ENCODE measurements at regions of chr2 and their contacts with region 1.

Region 1: GRCh38 chr2:54657664-54658083 is 65.8 kb upstream of the EML6 start:
- DNase-seq: peak; percentile 61 to 82
- ATAC-seq: peak; percentile 56
- H3K4me3 ChIP-seq: no peak overlapping the region
- H3K27ac ChIP-seq: no peak overlapping the region
- H3K4me1 ChIP-seq: no peaks in the 10 kb centered on the region
- H3K27me3 ChIP-seq: no peaks in the 10 kb centered on the region

Region 2: DNA sequence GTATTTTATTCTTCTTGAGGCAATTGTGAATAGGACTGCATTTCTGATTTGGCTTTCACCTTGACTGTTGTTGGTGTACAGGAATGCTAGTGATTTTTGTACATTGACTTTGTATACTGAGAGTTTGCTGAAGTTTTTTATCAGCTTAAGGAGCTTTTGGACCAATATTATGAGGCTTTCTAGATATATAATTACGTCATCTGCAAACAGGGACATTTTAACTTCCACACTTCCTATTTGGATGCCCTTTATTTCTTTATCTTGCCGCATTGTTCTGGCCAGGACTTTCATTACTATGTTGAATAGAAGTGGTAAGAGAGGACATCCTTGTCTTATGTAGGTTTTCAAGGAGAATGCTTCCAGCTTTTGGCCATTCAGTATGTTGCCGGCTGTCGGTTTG is 1315.4 kb before region 1 on chr2:
- intact Hi-C with region 1: no loop called
- DNase-seq: no peak
- ATAC-seq: no peak
- H3K4me3 ChIP-seq: no peak overlapping the region
- H3K27ac ChIP-seq: no peak overlapping the region
- H3K4me1 ChIP-seq: no peaks in the 10 kb centered on the region
- H3K27me3 ChIP-seq: no peaks in the 10 kb centered on the region

Region 3: GRCh38 chr2:54522624-54523281 is 134.9 kb before region 1 on chr2:
- intact Hi-C with region 1: loop called in 1 of 2 experiments (anchors 10 kb)
- DNase-seq: no peak
- ATAC-seq: peak; percentile 76
- H3K4me3 ChIP-seq: no peak overlapping the region
- H3K27ac ChIP-seq: no peak overlapping the region
- H3K4me1 ChIP-seq: peaks cover 2 to 3% of the 10 kb centered on the region in 2 donors
- H3K27me3 ChIP-seq: no peaks in the 10 kb centered on the region

Measured in aorta (tissue), 5 donors.